Endothelial cell of umbilical vein (primary cell): ENCODE measurements at regions of chr2 and their contacts with region 1.

Region 1: GRCh38 chr2:168717790-168718502 is 84.5 kb upstream of the NOSTRIN start:
- DNase-seq: peak; percentile 33
- H3K4me3 ChIP-seq: no peak overlapping the region
- H3K27ac ChIP-seq: no peak overlapping the region
- H3K4me1 ChIP-seq: peaks cover 19% of the 10 kb centered on the region
- H3K27me3 ChIP-seq: no peaks in the 10 kb centered on the region
- CTCF ChIP-seq: no peak
- POLR2A ChIP-seq: no peak

Region 2: DNA sequence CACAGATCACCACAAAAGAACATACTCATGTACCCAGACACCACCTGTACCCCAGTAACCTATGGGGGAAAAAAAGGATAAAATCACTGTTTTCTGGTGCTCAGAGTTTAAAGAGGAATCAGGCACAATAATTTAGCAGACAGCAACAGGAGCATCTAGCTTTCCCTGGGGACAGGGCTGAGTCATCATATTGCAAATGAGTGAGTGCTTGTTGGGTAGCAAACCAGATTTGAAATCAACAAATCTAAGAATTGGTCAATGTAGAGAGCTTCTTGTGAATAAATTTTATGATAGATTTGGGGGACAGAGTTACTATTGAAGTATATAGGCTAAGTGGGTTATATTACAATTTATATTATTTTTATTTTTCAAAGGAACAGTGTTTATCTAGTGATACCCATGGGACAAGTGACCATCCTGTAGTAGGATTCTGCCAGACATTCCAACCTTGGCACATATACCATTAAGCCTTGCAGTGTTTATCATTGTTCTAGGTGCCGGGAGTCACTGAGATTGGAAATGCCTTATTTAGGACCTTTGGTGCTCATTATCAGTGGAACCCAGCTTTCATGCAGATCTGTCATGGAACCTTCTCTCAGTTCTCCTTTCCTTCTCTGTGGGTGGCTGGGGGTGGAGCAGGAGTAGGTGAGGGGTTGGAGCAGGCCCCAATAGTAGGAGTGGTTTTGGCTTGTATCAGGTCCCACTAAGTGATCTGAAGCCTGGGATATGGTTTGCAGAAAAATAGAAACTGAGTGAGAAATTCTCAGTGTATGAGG is 144.6 kb before region 1 on chr2:
- CTCF ChIA-PET with region 1: no interaction called
- POLR2A ChIA-PET with region 1: no interaction called
- dilution Hi-C with region 1: no loop called
- intact Hi-C with region 1: no loop called
- DNase-seq: no peak
- H3K4me3 ChIP-seq: no peak overlapping the region
- H3K27ac ChIP-seq: no peak overlapping the region
- H3K4me1 ChIP-seq: peaks cover 7% of the 10 kb centered on the region
- H3K27me3 ChIP-seq: no peaks in the 10 kb centered on the region
- CTCF ChIP-seq: no peak
- POLR2A ChIP-seq: no peak

Region 3: DNA sequence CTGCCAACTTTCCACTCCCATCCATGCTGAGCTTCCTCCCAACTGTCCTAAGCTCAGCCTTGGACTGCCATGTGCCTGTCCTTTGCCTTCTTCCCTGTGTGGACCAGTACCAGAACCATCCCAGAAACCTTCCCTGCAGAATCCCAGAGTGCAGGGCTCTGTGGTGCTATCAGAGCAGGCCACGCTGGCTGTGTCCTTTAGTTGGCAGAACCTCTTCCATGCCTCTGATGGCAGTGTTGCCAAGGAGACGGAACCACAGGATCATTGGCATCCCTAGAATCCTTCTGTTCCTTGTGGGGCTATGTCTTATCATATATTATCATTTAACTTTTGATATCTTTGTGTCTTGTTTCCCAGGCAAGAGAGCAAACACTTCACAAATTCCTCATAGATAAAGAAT is 11.5 kb after region 1 on chr2:
- CTCF ChIA-PET with region 1: no interaction called
- POLR2A ChIA-PET with region 1: no interaction called
- dilution Hi-C with region 1: no loop called
- intact Hi-C with region 1: loop called (anchors 1 kb)
- DNase-seq: no peak
- H3K4me3 ChIP-seq: no peak overlapping the region
- H3K27ac ChIP-seq: no peak overlapping the region
- H3K4me1 ChIP-seq: no peaks in the 10 kb centered on the region
- H3K27me3 ChIP-seq: no peaks in the 10 kb centered on the region
- CTCF ChIP-seq: no peak
- POLR2A ChIP-seq: no peak

Region 4: GRCh38 chr2:168992591-168993349 is 274.8 kb after region 1 on chr2:
- CTCF ChIA-PET with region 1: no interaction called
- POLR2A ChIA-PET with region 1: no interaction called
- dilution Hi-C with region 1: no loop called
- intact Hi-C with region 1: no loop called
- DNase-seq: peak; percentile 73
- H3K4me3 ChIP-seq: no peak overlapping the region
- H3K27ac ChIP-seq: peak overlapping the region; percentile 90
- H3K4me1 ChIP-seq: peaks cover 63% of the 10 kb centered on the region
- H3K27me3 ChIP-seq: no peaks in the 10 kb centered on the region
- CTCF ChIP-seq: no peak
- POLR2A ChIP-seq: no peak